ENCODE measurements at regions of chr7 and their contacts with region 1.

Region 1: GRCh38 chr7:129952653-129953560 is at the start of gene UBE2H:
- DNase-seq: peak; percentile 89
- ATAC-seq: peak; percentile 73
- H3K4me3 Mint-ChIP-seq: peak within 1 kb of the TSS; percentile 98
- H3K27ac Mint-ChIP-seq: peak within 1 kb of the TSS; percentile 98
- H3K4me1 Mint-ChIP-seq: peaks cover 10% of the 10 kb centered on the region
- H3K27me3 Mint-ChIP-seq: no peaks in the 10 kb centered on the region
- CTCF ChIP-seq: no peak
- total RNA-seq, gene UBE2H: 28.8 and 32.6 TPM in 2 replicates

Region 2: GRCh38 chr7:129502376-129502776 is 450.5 kb before region 1 on chr7 and contains the start of gene SMKR1:
- CTCF ChIA-PET with region 1: no interaction called
- POLR2A ChIA-PET with region 1: no interaction called
- intact Hi-C with region 1: loop called (anchors 2 kb)
- DNase-seq: peak; percentile 97
- ATAC-seq: peak; percentile 93
- H3K4me3 Mint-ChIP-seq: peak within 1 kb of the TSS; percentile 83
- H3K27ac Mint-ChIP-seq: peak within 1 kb of the TSS; percentile 78
- H3K4me1 Mint-ChIP-seq: peaks cover 30% of the 10 kb centered on the region
- H3K27me3 Mint-ChIP-seq: no peaks in the 10 kb centered on the region
- CTCF ChIP-seq: no peak
- total RNA-seq, gene SMKR1: 2.2 and 2.4 TPM in 2 replicates

Region 3: GRCh38 chr7:129780257-129780973 is 172.5 kb before region 1 on chr7:
- CTCF ChIA-PET with region 1: no interaction called
- POLR2A ChIA-PET with region 1: no interaction called
- intact Hi-C with region 1: loop called (anchors 5 kb)
- DNase-seq: peak; percentile 62
- ATAC-seq: peak; percentile 79
- H3K4me3 Mint-ChIP-seq: peak overlapping the region; percentile 71
- H3K27ac Mint-ChIP-seq: no peak overlapping the region
- H3K4me1 Mint-ChIP-seq: peaks cover 38% of the 10 kb centered on the region
- H3K27me3 Mint-ChIP-seq: peaks cover 41% of the 10 kb centered on the region
- CTCF ChIP-seq: no peak

Region 4: DNA sequence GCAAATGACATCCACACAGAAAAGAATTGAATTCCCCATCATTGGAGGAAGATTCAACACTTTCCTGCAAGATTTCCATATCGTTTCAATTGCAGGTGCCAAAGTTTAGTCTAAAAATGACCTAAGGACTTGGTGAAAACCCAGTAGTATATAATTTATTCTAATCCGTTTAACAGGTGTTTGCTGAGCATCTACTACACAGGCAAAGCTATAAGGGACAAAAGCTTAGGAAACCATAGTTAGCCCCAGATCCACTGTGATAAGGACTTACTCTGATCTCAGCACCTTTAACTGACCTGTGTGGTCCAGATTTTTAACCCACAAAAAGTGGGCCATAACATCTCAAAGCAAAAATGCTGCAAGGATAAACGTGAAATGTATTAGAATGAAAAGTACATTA is 19.3 kb before region 1 on chr7:
- CTCF ChIA-PET with region 1: interaction called, 3 read pairs
- POLR2A ChIA-PET with region 1: interaction called, 6 read pairs
- intact Hi-C with region 1: loop called (anchors 1 kb)
- DNase-seq: no peak
- ATAC-seq: no peak
- H3K4me3 Mint-ChIP-seq: no peak overlapping the region
- H3K27ac Mint-ChIP-seq: peak overlapping the region; percentile 74
- H3K4me1 Mint-ChIP-seq: peaks cover 21% of the 10 kb centered on the region
- H3K27me3 Mint-ChIP-seq: no peaks in the 10 kb centered on the region
- CTCF ChIP-seq: no peak

Region 5: GRCh38 chr7:130668257-130669084 is 715.6 kb after region 1 on chr7 and contains the start of gene COPG2:
- CTCF ChIA-PET with region 1: no interaction called
- POLR2A ChIA-PET with region 1: no interaction called
- intact Hi-C with region 1: loop called (anchors 2 kb)
- DNase-seq: peak; percentile 87
- ATAC-seq: peak; percentile 93
- H3K4me3 Mint-ChIP-seq: peak within 1 kb of the TSS; percentile 89
- H3K27ac Mint-ChIP-seq: peak within 1 kb of the TSS; percentile 75
- H3K4me1 Mint-ChIP-seq: peaks cover 11% of the 10 kb centered on the region
- H3K27me3 Mint-ChIP-seq: peaks cover 3% of the 10 kb centered on the region
- CTCF ChIP-seq: no peak
- total RNA-seq, gene COPG2: 15.3 and 15.4 TPM in 2 replicates